ENCODE measurements at regions of chr4 and their contacts with region 1.

Region 1: GRCh38 chr4:98143001-98143899 is at the start of gene STPG2:
- DNase-seq: peak; percentile 90 to 95
- ATAC-seq: peak; percentile 99 to 100 (median 100)
- H3K4me3 ChIP-seq: peak within 1 kb of the TSS; percentile 61 to 78 (median 73)
- H3K27ac ChIP-seq: peak within 1 kb of the TSS; percentile 33 to 94 (median 86)
- H3K4me1 ChIP-seq: peaks cover 0 to 14% (median 5%) of the 10 kb centered on the region in 9 donors
- H3K27me3 ChIP-seq: no peaks in the 10 kb centered on the region
- CTCF ChIP-seq: peak in 8 of 9 donors; percentile 20 to 61 (median 51)
- total RNA-seq, gene STPG2: 0.22 to 0.58 (median 0.42) TPM

Region 2: GRCh38 chr4:98260579-98261290 is 117.5 kb after region 1 on chr4:
- intact Hi-C with region 1: loop called in 5 of 10 experiments (anchors 1 to 10 kb)
- DNase-seq: peak; percentile 96 to 97
- ATAC-seq: peak; percentile 97 to 99 (median 98)
- H3K4me3 ChIP-seq: peak overlapping the region; percentile 46 to 93 (median 82)
- H3K27ac ChIP-seq: peak overlapping the region; percentile 74 to 100 (median 98)
- H3K4me1 ChIP-seq: peaks cover 0 to 41% (median 19%) of the 10 kb centered on the region in 9 donors
- H3K27me3 ChIP-seq: no peaks in the 10 kb centered on the region
- CTCF ChIP-seq: no peak

Region 3: DNA sequence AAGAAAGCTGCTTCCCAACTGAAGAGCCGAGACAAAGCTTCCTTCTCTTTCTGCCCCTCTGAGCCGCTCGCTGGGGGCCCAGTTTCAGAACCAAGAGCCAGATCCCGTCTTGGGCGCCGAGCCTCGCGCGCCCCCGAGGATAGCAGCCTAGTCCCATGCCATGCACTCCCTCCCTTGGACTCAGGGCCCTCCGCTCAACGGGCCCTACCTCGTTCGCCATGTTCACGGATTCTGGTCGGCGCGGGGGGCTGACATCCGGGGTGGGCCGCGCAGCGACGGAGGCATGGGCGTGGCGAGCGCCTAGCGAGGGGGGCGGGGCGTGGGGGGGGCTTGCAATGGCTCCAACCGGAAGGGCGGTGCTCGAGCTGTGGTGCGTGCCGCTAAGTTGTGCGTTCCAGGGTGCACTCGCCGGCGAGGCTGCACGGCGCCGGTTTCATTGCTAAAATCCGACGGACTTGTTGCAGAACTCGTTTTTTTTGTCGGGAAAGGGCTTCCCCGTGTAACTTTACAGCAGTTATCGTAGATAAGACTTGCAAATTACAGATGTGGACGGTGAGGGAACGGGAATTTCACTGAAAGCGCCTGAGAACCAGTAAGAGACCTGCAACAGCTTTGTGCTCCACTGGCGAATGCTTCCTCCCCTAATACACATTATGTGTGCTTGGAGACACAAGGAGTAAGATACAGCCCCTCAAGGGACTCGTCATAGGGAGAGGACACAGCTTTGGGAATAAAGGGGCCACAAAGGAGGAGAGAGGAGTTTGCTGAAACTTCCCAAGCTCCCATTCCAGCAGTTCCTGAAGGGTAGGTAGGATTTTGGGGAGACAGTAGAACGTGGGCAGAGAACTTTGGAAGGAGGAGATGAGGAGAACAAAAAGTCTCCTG is 945.5 kb after region 1 on chr4 and contains the start of gene ADH5:
- intact Hi-C with region 1: loop called in 1 of 10 experiments (anchors 10 kb)
- DNase-seq: peak; percentile 90 to 91
- ATAC-seq: peak; percentile 97 to 100 (median 99)
- H3K4me3 ChIP-seq: peak within 1 kb of the TSS; percentile 63 to 86 (median 76)
- H3K27ac ChIP-seq: peak within 1 kb of the TSS; percentile 90 to 97 (median 94)
- H3K4me1 ChIP-seq: peaks cover 0 to 61% (median 54%) of the 10 kb centered on the region in 9 donors
- H3K27me3 ChIP-seq: no peaks in the 10 kb centered on the region
- CTCF ChIP-seq: no peak
- total RNA-seq, gene ADH5: 150 to 254 (median 204) TPM